ENCODE measurements at regions of chr20 and their contacts with region 1.

Region 1: DNA sequence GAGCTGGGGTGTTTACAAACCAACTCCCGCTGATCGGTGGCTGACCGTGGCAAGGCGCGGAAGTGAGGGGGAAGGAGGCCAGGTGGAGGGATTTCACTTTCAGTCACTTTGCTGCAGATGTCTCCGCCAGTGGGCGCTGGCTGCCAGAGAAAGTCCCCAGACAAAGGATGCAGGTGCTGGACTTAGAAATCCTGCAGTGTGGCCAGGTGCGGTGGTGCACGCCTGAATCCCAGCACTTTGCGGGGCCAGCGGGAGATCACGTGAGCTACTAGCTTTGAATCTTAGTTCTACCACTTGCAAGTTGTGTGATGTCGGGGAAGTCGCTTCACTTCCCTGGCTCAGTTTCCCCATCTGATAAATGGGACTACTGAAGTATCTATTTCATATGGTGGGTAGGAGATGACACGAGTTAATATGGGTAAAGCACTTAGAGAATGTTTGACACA is 180.4 kb downstream of the ZNF217 start:
- DNase-seq: peak; percentile 23 to 75 (median 53)
- ATAC-seq: no peak
- H3K4me3 ChIP-seq: no peak overlapping the region
- H3K4me3 Mint-ChIP-seq: peak overlapping the region; percentile 53
- H3K27ac ChIP-seq: no peak overlapping the region
- H3K27ac Mint-ChIP-seq: peak overlapping the region; percentile 32
- H3K4me1 ChIP-seq: peaks cover 4% of the 10 kb centered on the region
- H3K4me1 Mint-ChIP-seq: peaks cover 6% of the 10 kb centered on the region
- H3K27me3 ChIP-seq: no peaks in the 10 kb centered on the region
- H3K27me3 Mint-ChIP-seq: peaks cover 3% of the 10 kb centered on the region
- CTCF ChIP-seq: peak; percentile 51

Region 2: DNA sequence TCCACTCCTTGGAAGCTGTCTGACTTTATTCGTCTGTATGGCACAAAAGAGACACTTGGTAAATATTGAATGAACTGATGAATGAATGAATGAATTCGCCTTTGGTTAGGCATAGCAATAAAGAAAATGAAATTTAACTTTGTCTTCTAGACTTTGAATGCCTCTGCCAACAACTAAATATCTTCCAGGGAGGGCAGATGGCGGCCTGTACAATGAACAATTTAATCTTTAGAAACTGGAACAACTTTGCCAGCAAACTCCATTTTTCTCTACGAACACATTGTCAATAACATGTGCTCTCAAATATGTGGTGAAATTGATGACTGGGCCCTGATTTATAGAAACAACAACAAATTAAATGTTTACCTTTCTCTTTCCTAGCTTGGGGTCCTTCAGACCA is 39.9 kb after region 1 on chr20:
- CTCF ChIA-PET with region 1: no interaction called
- POLR2A ChIA-PET with region 1: no interaction called
- intact Hi-C with region 1: no loop called
- DNase-seq: no peak
- ATAC-seq: no peak
- H3K4me3 ChIP-seq: no peak overlapping the region
- H3K4me3 Mint-ChIP-seq: no peak overlapping the region
- H3K27ac ChIP-seq: no peak overlapping the region
- H3K27ac Mint-ChIP-seq: no peak overlapping the region
- H3K4me1 ChIP-seq: no peaks in the 10 kb centered on the region
- H3K4me1 Mint-ChIP-seq: no peaks in the 10 kb centered on the region
- H3K27me3 ChIP-seq: no peaks in the 10 kb centered on the region
- H3K27me3 Mint-ChIP-seq: peaks cover 2% of the 10 kb centered on the region
- CTCF ChIP-seq: no peak

Region 3: DNA sequence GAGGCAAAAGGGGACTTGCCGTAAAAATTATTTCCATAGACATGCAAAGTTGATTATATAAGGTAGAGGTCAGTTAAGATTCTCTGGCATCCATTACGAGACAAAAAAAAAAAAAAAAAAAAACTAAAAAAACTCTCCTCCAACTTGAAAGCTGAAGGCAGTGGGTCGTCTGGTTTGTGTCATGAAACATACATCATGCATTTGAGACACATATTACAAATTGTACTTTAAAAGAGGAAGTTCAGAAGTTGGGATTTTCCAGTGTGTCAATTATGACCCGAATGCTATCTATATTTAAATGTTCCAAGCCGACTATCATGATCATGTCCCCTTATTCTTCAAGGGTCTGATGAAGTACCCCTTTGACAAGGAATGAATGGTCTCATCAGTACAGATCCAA is 55.4 kb after region 1 on chr20:
- CTCF ChIA-PET with region 1: no interaction called
- POLR2A ChIA-PET with region 1: no interaction called
- intact Hi-C with region 1: no loop called
- DNase-seq: no peak
- ATAC-seq: no peak
- H3K4me3 ChIP-seq: no peak overlapping the region
- H3K4me3 Mint-ChIP-seq: no peak overlapping the region
- H3K27ac ChIP-seq: no peak overlapping the region
- H3K27ac Mint-ChIP-seq: no peak overlapping the region
- H3K4me1 ChIP-seq: no peaks in the 10 kb centered on the region
- H3K4me1 Mint-ChIP-seq: no peaks in the 10 kb centered on the region
- H3K27me3 ChIP-seq: no peaks in the 10 kb centered on the region
- H3K27me3 Mint-ChIP-seq: peaks cover 11% of the 10 kb centered on the region
- CTCF ChIP-seq: no peak

Region 4: GRCh38 chr20:53939572-53940359 is 526.6 kb after region 1 on chr20:
- CTCF ChIA-PET with region 1: interaction called, 5 read pairs
- POLR2A ChIA-PET with region 1: no interaction called
- intact Hi-C with region 1: loop called (anchors 1 to 5 kb)
- DNase-seq: peak; percentile 38 to 83 (median 67)
- ATAC-seq: peak; percentile 76
- H3K4me3 ChIP-seq: no peak overlapping the region
- H3K4me3 Mint-ChIP-seq: no peak overlapping the region
- H3K27ac ChIP-seq: no peak overlapping the region
- H3K27ac Mint-ChIP-seq: no peak overlapping the region
- H3K4me1 ChIP-seq: peaks cover 31% of the 10 kb centered on the region
- H3K4me1 Mint-ChIP-seq: peaks cover 43% of the 10 kb centered on the region
- H3K27me3 ChIP-seq: no peaks in the 10 kb centered on the region
- H3K27me3 Mint-ChIP-seq: no peaks in the 10 kb centered on the region
- CTCF ChIP-seq: peak; percentile 75

Region 5: DNA sequence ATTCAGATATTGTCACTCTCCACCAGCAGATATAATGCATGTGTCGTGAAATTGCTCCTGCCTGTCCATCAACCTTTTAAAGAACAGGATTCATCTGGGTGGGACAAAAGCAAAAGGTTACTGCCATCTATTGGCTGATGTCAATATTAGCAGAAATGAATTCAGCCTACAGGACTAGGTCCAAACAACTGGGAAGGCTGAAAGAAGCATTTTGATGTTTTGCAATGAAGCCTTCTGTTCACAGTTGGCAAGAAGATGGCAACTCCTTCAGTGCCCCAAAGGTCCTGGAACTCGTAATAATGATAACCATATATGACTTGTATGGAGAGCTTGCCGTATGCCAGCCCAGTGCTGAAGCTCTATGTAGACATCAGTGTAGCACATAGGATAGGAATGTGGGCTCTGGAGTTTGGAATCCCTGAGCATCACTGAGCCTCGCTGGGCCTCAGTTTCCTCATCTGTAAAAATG is 649.6 kb after region 1 on chr20:
- CTCF ChIA-PET with region 1: interaction called, 6 read pairs
- POLR2A ChIA-PET with region 1: no interaction called
- intact Hi-C with region 1: loop called (anchors 1 kb)
- DNase-seq: peak in 2 of 9 experiments; percentile 40 to 60
- ATAC-seq: no peak
- H3K4me3 ChIP-seq: no peak overlapping the region
- H3K4me3 Mint-ChIP-seq: no peak overlapping the region
- H3K27ac ChIP-seq: no peak overlapping the region
- H3K27ac Mint-ChIP-seq: no peak overlapping the region
- H3K4me1 ChIP-seq: peaks cover 24% of the 10 kb centered on the region
- H3K4me1 Mint-ChIP-seq: no peaks in the 10 kb centered on the region
- H3K27me3 ChIP-seq: no peaks in the 10 kb centered on the region
- H3K27me3 Mint-ChIP-seq: no peaks in the 10 kb centered on the region
- CTCF ChIP-seq: peak; percentile 53